Endothelial cell of umbilical vein (primary cell): ENCODE measurements at regions of chr9 and their contacts with region 1.

Region 1: DNA sequence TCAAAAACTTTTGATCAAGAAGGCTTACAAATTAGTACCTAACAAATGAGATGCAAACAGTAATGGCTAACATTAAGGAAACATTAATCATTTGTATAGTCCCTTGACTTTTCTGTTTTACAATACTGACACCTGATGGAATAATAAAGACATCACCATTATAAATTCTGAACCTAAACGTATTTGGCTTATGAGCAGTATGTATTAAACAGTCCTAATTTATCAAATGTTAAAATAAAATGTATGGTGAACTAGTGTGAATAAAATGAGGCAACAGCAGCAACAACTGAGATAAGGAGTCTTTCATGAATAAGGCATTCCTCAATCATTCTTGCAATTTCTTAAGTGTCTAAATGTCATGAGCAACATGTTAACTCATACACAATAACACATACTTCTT is 6.0 kb downstream of the PUM3 start:
- DNase-seq: peak; percentile 62
- H3K4me3 ChIP-seq: peak overlapping the region in 1 of 3 experiments; percentile 29
- H3K27ac ChIP-seq: no peak overlapping the region
- H3K4me1 ChIP-seq: peaks cover 31% of the 10 kb centered on the region
- H3K27me3 ChIP-seq: no peaks in the 10 kb centered on the region
- CTCF ChIP-seq: no peak
- POLR2A ChIP-seq: no peak

Region 2: DNA sequence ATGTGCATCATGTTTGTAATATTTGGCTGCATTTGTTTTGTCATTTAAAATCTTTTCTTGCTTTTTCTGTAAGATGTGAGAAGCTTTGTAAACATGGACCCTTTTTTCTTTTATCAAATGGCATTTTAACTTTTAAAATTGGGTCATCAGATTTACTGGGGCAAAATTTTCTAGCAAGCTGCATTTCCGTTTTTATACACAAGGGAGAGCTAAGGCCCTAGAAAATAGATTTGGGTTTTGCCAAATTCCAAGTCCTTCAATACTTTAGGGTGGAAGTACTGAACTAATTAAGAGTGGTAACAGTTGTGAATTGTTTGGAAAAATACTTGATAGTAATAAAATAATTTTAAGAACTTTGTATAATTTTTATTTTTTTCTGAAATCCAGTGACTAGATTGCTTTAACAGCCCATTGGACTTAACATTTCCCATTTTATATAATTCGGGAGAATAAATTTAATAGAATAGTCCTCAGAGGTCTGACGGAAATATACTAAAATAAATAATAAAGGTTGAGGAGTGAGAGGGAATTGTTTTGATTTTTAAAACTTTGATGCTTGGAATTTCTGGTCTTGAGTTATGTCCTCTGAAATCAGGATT is 705.3 kb before region 1 on chr9:
- CTCF ChIA-PET with region 1: interaction called, 11 read pairs
- POLR2A ChIA-PET with region 1: no interaction called
- dilution Hi-C with region 1: no loop called
- intact Hi-C with region 1: loop called (anchors 1 kb)
- DNase-seq: peak; percentile 42
- H3K4me3 ChIP-seq: no peak overlapping the region
- H3K27ac ChIP-seq: no peak overlapping the region
- H3K4me1 ChIP-seq: peaks cover 15% of the 10 kb centered on the region
- H3K27me3 ChIP-seq: no peaks in the 10 kb centered on the region
- CTCF ChIP-seq: peak; percentile 40 to 48
- POLR2A ChIP-seq: no peak

Region 3: DNA sequence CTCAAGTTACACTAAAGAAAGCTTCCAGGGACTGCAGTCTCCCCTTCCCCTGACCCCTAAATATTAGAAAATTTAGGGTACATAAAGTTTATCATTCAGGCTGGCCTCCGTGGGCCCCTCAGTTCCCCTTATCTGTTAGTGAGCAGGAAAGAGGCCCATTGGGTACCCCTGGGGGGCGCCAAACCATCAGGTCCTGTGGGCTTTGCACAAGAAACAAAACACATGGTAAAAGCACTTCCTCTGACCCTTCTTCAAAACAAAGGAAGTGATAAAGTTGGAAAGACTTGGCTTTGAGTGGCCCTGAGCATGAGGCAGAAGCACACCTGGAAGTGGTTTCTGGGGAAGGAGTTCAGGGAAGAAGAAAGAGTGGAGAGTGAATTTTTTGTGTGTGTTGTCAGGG is 609.8 kb before region 1 on chr9:
- CTCF ChIA-PET with region 1: no interaction called
- POLR2A ChIA-PET with region 1: no interaction called
- dilution Hi-C with region 1: no loop called
- intact Hi-C with region 1: loop called (anchors 5 kb)
- DNase-seq: peak; percentile 18
- H3K4me3 ChIP-seq: no peak overlapping the region
- H3K27ac ChIP-seq: no peak overlapping the region
- H3K4me1 ChIP-seq: no peaks in the 10 kb centered on the region
- H3K27me3 ChIP-seq: no peaks in the 10 kb centered on the region
- CTCF ChIP-seq: peak; percentile 7 to 34
- POLR2A ChIP-seq: no peak

Region 4: DNA sequence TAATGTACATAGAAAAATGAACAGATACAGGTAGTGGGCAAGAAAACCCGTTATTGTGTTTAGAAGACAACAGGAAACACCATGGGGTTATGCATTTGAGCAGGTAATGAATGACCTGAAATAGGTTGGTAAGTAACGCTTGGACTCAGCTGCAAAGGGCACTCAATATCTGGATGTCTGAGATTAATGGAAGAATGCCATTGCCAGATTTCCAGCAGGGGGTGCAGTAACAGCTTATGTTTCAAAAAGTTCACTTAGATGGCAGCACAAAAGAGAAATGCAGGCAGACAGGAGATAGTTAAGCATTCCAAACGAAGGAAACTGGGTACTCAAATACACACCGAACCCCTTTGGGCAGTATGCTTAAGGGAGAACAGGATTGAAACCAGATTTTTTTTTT is 501.9 kb before region 1 on chr9:
- CTCF ChIA-PET with region 1: no interaction called
- POLR2A ChIA-PET with region 1: no interaction called
- dilution Hi-C with region 1: no loop called
- intact Hi-C with region 1: loop called (anchors 5 kb)
- DNase-seq: peak; percentile 8
- H3K4me3 ChIP-seq: no peak overlapping the region
- H3K27ac ChIP-seq: no peak overlapping the region
- H3K4me1 ChIP-seq: no peaks in the 10 kb centered on the region
- H3K27me3 ChIP-seq: no peaks in the 10 kb centered on the region
- CTCF ChIP-seq: peak in 1 of 2 donors; percentile 12
- POLR2A ChIP-seq: no peak